ENCODE measurements at regions of chrX and their contacts with region 1.

Region 1: GRCh38 chrX:3119376-3119775 is 78.1 kb downstream of the ARSF start:
- DNase-seq: no peak
- ATAC-seq: no peak
- H3K4me3 ChIP-seq: no peak overlapping the region
- H3K27ac ChIP-seq: no peak overlapping the region
- H3K4me1 ChIP-seq: no peaks in the 10 kb centered on the region
- H3K27me3 ChIP-seq: no peaks in the 10 kb centered on the region
- CTCF ChIP-seq: no peak

Region 2: DNA sequence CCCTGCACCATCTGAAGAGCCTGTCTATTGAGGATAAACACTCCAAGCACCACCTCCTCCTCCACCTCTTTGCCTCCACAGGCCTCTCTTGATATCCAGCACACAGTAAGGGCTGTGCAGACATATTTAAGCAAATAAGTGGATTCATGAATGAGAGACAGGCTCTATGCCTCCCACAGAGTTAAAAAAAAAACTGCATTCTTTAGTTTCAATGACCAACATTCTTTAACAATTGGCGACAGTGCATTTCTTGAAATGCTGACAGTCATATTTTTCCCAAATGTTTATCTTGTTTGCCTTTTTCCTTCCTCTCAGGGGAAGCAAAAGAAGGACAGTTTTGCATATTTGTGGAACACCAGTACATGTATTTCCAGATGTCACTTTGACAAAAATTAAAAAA is 188.5 kb after region 1 on chrX:
- intact Hi-C with region 1: no loop called
- DNase-seq: no peak
- ATAC-seq: no peak
- H3K4me3 ChIP-seq: no peak overlapping the region
- H3K27ac ChIP-seq: no peak overlapping the region
- H3K4me1 ChIP-seq: no peaks in the 10 kb centered on the region
- H3K27me3 ChIP-seq: no peaks in the 10 kb centered on the region
- CTCF ChIP-seq: no peak

Region 3: DNA sequence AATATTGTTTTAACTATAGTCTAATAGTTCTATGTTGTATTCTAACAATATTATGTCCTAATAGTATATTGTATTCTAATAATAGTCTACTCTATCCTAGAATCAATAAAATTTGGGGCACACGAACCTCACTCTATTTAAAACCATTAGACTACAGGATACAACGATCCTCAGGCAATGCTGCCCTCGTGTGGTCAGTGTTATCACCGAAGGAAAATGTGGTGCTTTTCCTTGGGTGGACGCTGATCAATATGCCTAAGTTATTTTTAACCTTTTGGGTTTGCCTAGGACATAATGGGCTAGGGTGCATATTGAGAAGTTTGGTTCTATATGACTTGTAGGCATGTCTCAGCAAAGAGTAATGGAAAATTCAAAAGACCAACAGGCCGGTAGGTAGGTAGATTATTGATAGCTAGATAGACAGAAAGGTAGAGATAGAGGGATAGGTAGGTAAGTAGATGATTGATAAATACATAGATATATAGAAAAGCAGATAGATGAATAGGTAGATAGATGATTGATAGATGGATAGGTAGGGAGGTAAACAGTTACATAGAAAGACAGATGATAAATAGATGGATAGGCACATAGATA is 519.0 kb after region 1 on chrX:
- intact Hi-C with region 1: loop called in 1 of 2 experiments (anchors 10 kb)
- DNase-seq: peak in 1 of 2 donors; percentile 16
- ATAC-seq: no peak
- H3K4me3 ChIP-seq: no peak overlapping the region
- H3K27ac ChIP-seq: no peak overlapping the region
- H3K4me1 ChIP-seq: no peaks in the 10 kb centered on the region
- H3K27me3 ChIP-seq: no peaks in the 10 kb centered on the region
- CTCF ChIP-seq: peak; percentile 45

Measured in psoas muscle (tissue), 8 donors.